ENCODE measurements at regions of chr1 and their contacts with region 1.

Region 1: GRCh38 chr1:205832326-205832751 is 17.6 kb downstream of the PM20D1 start:
- DNase-seq: no peak
- ATAC-seq: no peak
- H3K4me3 ChIP-seq: no peak overlapping the region
- H3K27ac ChIP-seq: no peak overlapping the region
- H3K4me1 ChIP-seq: no peaks in the 10 kb centered on the region
- H3K27me3 ChIP-seq: peaks cover 4% of the 10 kb centered on the region
- CTCF ChIP-seq: no peak

Region 2: GRCh38 chr1:205615789-205616188 is 216.6 kb before region 1 on chr1:
- CTCF ChIA-PET with region 1: no interaction called
- POLR2A ChIA-PET with region 1: interaction called, 11 read pairs
- in situ Hi-C with region 1: no loop called
- intact Hi-C with region 1: no loop called
- DNase-seq: no peak
- ATAC-seq: no peak
- H3K4me3 ChIP-seq: no peak overlapping the region
- H3K27ac ChIP-seq: no peak overlapping the region
- H3K4me1 ChIP-seq: 0 out of 2 replicates have a peak, but pooled peaks cover 6% of the 10 kb centered on the region
- H3K27me3 ChIP-seq: no peaks in the 10 kb centered on the region
- CTCF ChIP-seq: no peak

Measured in Panc1 (cell line).